ENCODE measurements at regions of chr11 and their contacts with region 1.

Region 1: DNA sequence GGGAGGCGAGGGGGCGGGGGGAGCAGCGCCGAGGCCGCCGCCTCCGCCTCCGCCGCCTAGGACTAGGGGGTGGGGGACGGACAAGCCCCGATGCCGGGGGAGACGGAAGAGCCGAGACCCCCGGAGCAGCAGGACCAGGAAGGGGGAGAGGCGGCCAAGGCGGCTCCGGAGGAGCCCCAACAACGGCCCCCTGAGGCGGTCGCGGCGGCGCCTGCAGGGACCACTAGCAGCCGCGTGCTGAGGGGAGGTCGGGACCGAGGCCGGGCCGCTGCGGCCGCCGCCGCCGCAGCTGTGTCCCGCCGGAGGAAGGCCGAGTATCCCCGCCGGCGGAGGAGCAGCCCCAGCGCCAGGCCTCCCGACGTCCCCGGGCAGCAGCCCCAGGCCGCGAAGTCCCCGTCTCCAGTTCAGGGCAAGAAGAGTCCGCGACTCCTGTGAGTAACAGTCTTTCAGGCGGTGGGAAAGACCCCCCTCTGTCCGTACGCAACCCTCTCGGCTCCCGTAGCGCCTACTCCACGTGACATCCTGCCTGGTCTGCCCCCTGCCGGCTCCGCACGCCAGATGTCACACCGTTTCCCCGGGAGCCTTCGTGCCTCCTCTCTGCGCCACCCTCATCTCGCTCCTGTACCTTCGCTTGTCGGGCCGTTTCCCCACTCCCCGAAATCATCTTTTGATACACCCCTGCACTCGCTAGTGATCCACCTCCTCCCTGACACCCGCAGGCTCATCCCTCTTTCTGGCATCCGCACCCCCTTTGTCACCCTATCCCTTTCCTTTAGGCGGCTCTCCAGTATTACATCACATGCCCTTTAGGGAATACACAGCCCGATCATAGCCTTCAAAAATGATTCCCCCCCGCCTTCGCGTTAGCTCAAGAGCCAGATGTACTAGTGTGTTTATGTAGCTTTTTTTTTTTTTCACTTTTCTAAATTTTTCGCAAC is 598 bp downstream of the ZFP91 start:
- DNase-seq: peak; percentile 84 to 97 (median 93)
- ATAC-seq: peak; percentile 30
- H3K4me3 ChIP-seq: peak overlapping the region; percentile 70 to 82
- H3K4me3 Mint-ChIP-seq: peak overlapping the region; percentile 99
- H3K27ac ChIP-seq: peak overlapping the region; percentile 91 to 92
- H3K27ac Mint-ChIP-seq: peak overlapping the region; percentile 100
- H3K4me1 ChIP-seq: peaks cover 54% of the 10 kb centered on the region
- H3K4me1 Mint-ChIP-seq: peaks cover 72% of the 10 kb centered on the region
- H3K27me3 ChIP-seq: no peaks in the 10 kb centered on the region
- H3K27me3 Mint-ChIP-seq: no peaks in the 10 kb centered on the region
- CTCF ChIP-seq: peak; percentile 80

Region 2: DNA sequence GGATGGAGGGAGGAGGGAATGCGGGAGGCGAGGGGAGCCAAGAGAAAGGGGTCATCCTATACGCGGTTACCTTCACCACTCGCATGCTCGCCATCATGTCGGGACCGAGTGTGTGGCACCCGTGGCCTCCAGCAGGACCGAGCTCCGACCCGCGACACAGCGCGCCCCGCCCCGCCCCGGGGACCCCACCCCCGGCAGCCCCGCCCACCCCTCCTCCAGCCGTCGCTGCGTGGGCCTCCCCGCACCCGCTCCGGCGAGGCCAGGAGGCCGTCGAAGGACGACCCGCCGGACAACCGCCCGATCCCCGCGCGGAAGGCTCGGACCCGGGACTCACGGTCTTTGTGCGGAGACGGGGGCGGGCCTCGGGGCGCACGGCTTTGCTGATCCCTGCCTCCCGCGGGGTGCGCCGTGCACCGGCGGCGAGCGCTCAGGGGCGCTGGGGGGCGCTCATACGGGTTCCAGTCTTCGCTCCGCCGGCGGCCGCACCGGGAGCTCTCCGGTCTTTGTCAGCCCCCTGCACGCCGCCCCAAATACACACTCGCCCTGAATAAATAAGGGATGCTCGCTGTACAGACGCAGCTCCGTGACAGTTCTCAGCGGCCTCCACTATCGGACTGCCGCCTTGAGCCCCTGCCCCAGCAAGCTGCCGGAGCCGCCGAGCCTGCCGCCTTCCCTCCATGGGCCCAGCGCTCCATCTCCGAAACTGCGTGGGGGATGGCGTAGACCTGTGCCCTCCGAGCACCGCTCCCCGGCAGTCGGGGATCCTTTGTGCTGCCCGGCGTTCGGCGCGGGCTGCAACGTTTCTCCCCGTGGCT is 1011.7 kb before region 1 on chr11 and contains the start of gene UBE2L6:
- CTCF ChIA-PET with region 1: no interaction called
- POLR2A ChIA-PET with region 1: no interaction called
- intact Hi-C with region 1: loop called (anchors 2 to 5 kb)
- DNase-seq: peak; percentile 29 to 92 (median 79)
- ATAC-seq: peak; percentile 77
- H3K4me3 ChIP-seq: peak within 1 kb of the TSS; percentile 86
- H3K4me3 Mint-ChIP-seq: peak within 1 kb of the TSS; percentile 100
- H3K27ac ChIP-seq: peak within 1 kb of the TSS; percentile 86 to 87
- H3K27ac Mint-ChIP-seq: peak within 1 kb of the TSS; percentile 99
- H3K4me1 ChIP-seq: peaks cover 20% of the 10 kb centered on the region
- H3K4me1 Mint-ChIP-seq: peaks cover 48% of the 10 kb centered on the region
- H3K27me3 ChIP-seq: no peaks in the 10 kb centered on the region
- H3K27me3 Mint-ChIP-seq: no peaks in the 10 kb centered on the region
- CTCF ChIP-seq: peak; percentile 93
- total RNA-seq, gene UBE2L6: 44.4 to 47.2 TPM

Region 3: GRCh38 chr11:57712256-57713150 is 867.0 kb before region 1 on chr11 and contains the start of gene TMX2:
- CTCF ChIA-PET with region 1: no interaction called
- POLR2A ChIA-PET with region 1: no interaction called
- intact Hi-C with region 1: loop called (anchors 1 to 5 kb)
- DNase-seq: peak; percentile 78 to 97 (median 88)
- ATAC-seq: peak; percentile 87
- H3K4me3 ChIP-seq: peak within 1 kb of the TSS; percentile 98 to 100
- H3K4me3 Mint-ChIP-seq: peak within 1 kb of the TSS; percentile 98
- H3K27ac ChIP-seq: peak within 1 kb of the TSS; percentile 91 to 93
- H3K27ac Mint-ChIP-seq: peak within 1 kb of the TSS; percentile 97
- H3K4me1 ChIP-seq: peaks cover 33% of the 10 kb centered on the region
- H3K4me1 Mint-ChIP-seq: peaks cover 52% of the 10 kb centered on the region
- H3K27me3 ChIP-seq: no peaks in the 10 kb centered on the region
- H3K27me3 Mint-ChIP-seq: no peaks in the 10 kb centered on the region
- CTCF ChIP-seq: no peak
- total RNA-seq, gene TMX2: 38.5 to 42.1 TPM

Region 4: GRCh38 chr11:58334708-58335107 is 244.8 kb before region 1 on chr11:
- CTCF ChIA-PET with region 1: no interaction called
- POLR2A ChIA-PET with region 1: no interaction called
- intact Hi-C with region 1: no loop called
- DNase-seq: no peak
- ATAC-seq: no peak
- H3K4me3 ChIP-seq: no peak overlapping the region
- H3K4me3 Mint-ChIP-seq: no peak overlapping the region
- H3K27ac ChIP-seq: no peak overlapping the region
- H3K27ac Mint-ChIP-seq: no peak overlapping the region
- H3K4me1 ChIP-seq: no peaks in the 10 kb centered on the region
- H3K4me1 Mint-ChIP-seq: no peaks in the 10 kb centered on the region
- H3K27me3 ChIP-seq: peaks cover 0 to 7% of the 10 kb centered on the region in 2 experiments
- H3K27me3 Mint-ChIP-seq: peaks cover 11% of the 10 kb centered on the region
- CTCF ChIP-seq: no peak

Region 5: DNA sequence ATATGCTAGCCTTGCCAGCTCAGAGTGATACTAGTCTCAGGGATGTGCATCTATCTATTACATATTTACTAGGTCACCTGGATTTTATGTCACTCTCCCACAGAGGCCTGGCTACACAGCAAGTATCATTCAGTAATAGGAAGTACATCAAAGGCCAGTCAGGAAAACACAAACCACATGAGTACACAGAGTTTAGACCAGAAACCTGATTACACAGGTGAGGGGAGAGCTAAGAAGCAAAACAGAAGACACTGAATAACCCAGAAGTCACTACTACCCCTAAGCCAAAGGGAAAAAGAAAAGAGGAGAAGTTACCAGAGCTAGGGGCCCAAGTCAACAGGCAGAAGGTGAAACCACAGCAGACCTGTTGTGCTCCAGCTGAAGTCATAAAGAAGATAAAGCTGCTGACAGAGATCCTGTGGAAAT is 17.1 kb before region 1 on chr11:
- CTCF ChIA-PET with region 1: interaction called, 67 read pairs
- POLR2A ChIA-PET with region 1: interaction called, 39 read pairs
- intact Hi-C with region 1: loop called in 1 of 2 experiments (anchors 2 kb)
- DNase-seq: peak in 1 of 9 experiments; percentile 36
- ATAC-seq: peak; percentile 48
- H3K4me3 ChIP-seq: no peak overlapping the region
- H3K4me3 Mint-ChIP-seq: peak overlapping the region; percentile 20
- H3K27ac ChIP-seq: peak overlapping the region; percentile 7 to 37
- H3K27ac Mint-ChIP-seq: peak overlapping the region; percentile 90
- H3K4me1 ChIP-seq: peaks cover 53% of the 10 kb centered on the region
- H3K4me1 Mint-ChIP-seq: peaks cover 70% of the 10 kb centered on the region
- H3K27me3 ChIP-seq: no peaks in the 10 kb centered on the region
- H3K27me3 Mint-ChIP-seq: no peaks in the 10 kb centered on the region
- CTCF ChIP-seq: no peak

Region 6: DNA sequence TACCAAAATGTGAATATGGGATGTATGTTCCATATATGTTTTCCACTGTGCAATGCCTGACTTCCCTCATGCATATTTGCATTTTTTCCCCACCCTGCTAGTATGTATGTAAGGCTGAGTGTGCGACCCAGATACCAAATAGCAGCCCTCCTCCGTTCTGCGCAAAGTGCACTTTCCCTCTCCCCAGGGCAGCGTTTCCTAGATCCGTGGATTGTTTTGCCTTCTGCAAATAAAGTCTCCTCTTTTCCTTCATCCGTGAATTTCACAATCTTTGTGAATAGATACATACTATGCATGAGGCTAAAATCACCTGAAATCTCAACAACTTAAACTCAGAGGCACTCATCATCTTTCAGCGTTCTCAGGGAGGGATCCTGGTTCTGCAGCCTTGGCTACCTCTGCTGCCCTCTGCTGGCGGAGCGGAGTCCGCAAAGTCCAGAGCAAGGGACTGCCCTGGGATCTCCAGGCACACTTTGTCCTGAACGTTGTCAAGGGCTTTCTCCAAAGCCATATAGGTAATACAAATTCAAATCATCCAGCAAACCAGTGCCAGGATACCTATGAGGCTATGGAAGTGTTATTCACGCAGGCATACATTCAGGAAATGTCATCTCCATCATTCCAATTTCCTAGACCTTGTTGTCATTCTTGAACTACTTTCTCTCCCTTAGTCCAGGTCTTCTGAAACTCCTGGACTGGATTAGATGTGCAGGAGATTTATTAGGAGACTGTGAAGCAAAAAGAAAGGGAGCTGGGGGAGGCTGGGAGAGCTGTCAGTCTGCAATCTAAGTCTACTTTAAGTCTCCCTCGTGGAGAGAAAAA is 96.1 kb after region 1 on chr11:
- CTCF ChIA-PET with region 1: interaction called, 3 read pairs
- POLR2A ChIA-PET with region 1: no interaction called
- intact Hi-C with region 1: loop called (anchors 1 kb)
- DNase-seq: peak; percentile 46 to 86 (median 72)
- ATAC-seq: peak; percentile 80
- H3K4me3 ChIP-seq: no peak overlapping the region
- H3K4me3 Mint-ChIP-seq: no peak overlapping the region
- H3K27ac ChIP-seq: no peak overlapping the region
- H3K27ac Mint-ChIP-seq: no peak overlapping the region
- H3K4me1 ChIP-seq: no peaks in the 10 kb centered on the region
- H3K4me1 Mint-ChIP-seq: no peaks in the 10 kb centered on the region
- H3K27me3 ChIP-seq: no peaks in the 10 kb centered on the region
- H3K27me3 Mint-ChIP-seq: no peaks in the 10 kb centered on the region
- CTCF ChIP-seq: peak; percentile 93

Region 7: GRCh38 chr11:59448484-59448883 is 869.0 kb after region 1 on chr11:
- CTCF ChIA-PET with region 1: no interaction called
- POLR2A ChIA-PET with region 1: no interaction called
- intact Hi-C with region 1: no loop called
- DNase-seq: no peak
- ATAC-seq: no peak
- H3K4me3 ChIP-seq: no peak overlapping the region
- H3K4me3 Mint-ChIP-seq: no peak overlapping the region
- H3K27ac ChIP-seq: no peak overlapping the region
- H3K27ac Mint-ChIP-seq: no peak overlapping the region
- H3K4me1 ChIP-seq: no peaks in the 10 kb centered on the region
- H3K4me1 Mint-ChIP-seq: no peaks in the 10 kb centered on the region
- H3K27me3 ChIP-seq: no peaks in the 10 kb centered on the region
- H3K27me3 Mint-ChIP-seq: peaks cover 4% of the 10 kb centered on the region
- CTCF ChIP-seq: no peak

Region 8: GRCh38 chr11:59615637-59616395 is 1036.4 kb after region 1 on chr11 and contains the start of gene OSBP:
- CTCF ChIA-PET with region 1: no interaction called
- POLR2A ChIA-PET with region 1: no interaction called
- intact Hi-C with region 1: loop called (anchors 2 to 5 kb)
- DNase-seq: peak; percentile 92 to 100 (median 96)
- ATAC-seq: peak; percentile 73
- H3K4me3 ChIP-seq: peak within 1 kb of the TSS; percentile 86 to 96
- H3K4me3 Mint-ChIP-seq: peak within 1 kb of the TSS; percentile 87
- H3K27ac ChIP-seq: peak within 1 kb of the TSS; percentile 92 to 100
- H3K27ac Mint-ChIP-seq: peak within 1 kb of the TSS; percentile 97
- H3K4me1 ChIP-seq: peaks cover 41% of the 10 kb centered on the region
- H3K4me1 Mint-ChIP-seq: peaks cover 46% of the 10 kb centered on the region
- H3K27me3 ChIP-seq: no peaks in the 10 kb centered on the region
- H3K27me3 Mint-ChIP-seq: no peaks in the 10 kb centered on the region
- CTCF ChIP-seq: no peak
- total RNA-seq, gene OSBP: 66.0 to 66.3 TPM